Endothelial cell of umbilical vein (primary cell): ENCODE measurements at regions of chr1 and their contacts with region 1.

Region 1: DNA sequence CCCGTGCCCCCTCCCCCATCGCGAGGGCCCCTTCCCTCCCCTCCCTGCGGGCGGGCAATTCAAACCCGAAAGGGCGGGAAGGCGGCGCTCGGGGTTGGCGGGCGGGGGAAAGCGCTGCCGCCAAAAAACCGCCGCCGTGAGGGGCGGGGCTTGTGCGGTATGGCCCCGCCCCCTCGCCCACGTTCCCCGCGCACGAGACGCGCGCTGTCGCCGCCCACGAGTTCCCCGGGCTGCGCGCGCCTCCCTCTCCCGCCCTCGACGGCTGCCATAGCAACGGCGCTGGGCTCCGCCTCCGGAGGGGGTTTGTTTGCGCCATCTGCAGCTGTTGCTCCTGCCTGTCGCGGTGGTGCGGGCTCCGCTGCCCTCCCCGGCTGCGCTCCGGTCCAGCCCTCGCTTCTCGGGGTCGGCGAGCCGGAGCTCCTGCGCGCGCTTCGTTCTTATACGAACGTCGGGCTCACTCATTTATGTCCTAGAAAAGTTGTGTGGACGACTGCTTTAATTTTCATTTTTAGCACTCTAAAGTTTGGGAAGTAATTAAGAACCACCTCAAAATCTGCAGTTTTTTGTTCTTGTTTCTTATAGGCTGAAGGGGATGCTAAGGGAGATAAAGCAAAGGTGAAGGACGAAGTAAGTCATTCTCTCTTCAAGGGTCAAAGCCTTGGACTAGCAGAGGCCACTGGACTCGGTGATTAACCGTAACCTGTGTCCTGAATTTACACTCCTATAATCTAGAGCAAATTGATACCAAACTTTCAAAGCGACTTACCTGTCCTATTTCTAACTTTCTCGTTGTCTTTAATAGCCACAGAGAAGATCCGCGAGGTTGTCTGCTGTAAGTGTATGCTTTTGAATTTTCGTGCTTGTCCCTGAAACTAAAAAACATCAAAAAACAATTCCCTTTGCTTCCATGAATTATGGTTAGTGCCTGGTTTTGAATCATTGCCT is 933 bp downstream of the HMGN2 start:
- DNase-seq: peak; percentile 95
- H3K4me3 ChIP-seq: peak overlapping the region; percentile 82 to 98 (median 98)
- H3K27ac ChIP-seq: peak overlapping the region; percentile 31
- H3K4me1 ChIP-seq: peaks cover 11% of the 10 kb centered on the region
- H3K27me3 ChIP-seq: no peaks in the 10 kb centered on the region
- CTCF ChIP-seq: no peak
- POLR2A ChIP-seq: peak; percentile 14

Region 2: GRCh38 chr1:26431979-26432695 is 41.0 kb before region 1 on chr1 and contains the start of gene DHDDS:
- CTCF ChIA-PET with region 1: interaction called, 6 read pairs
- POLR2A ChIA-PET with region 1: no interaction called
- dilution Hi-C with region 1: no loop called
- intact Hi-C with region 1: loop called (anchors 2 kb)
- DNase-seq: peak; percentile 99
- H3K4me3 ChIP-seq: peak within 1 kb of the TSS; percentile 52 to 92 (median 75)
- H3K27ac ChIP-seq: peak within 1 kb of the TSS; percentile 54
- H3K4me1 ChIP-seq: peaks cover 20% of the 10 kb centered on the region
- H3K27me3 ChIP-seq: peaks cover 1 to 3% of the 10 kb centered on the region in 2 experiments
- CTCF ChIP-seq: no peak
- POLR2A ChIP-seq: peak; percentile 83
- total RNA-seq, gene DHDDS: 60.3 and 70.7 TPM in 2 replicates